HEK293 (cell line): ENCODE measurements at regions of chr14 and their contacts with region 1.

Region 1: GRCh38 chr14:76386915-76387782 is 11.2 kb downstream of the ESRRB start:
- H3K4me3 ChIP-seq: no peak overlapping the region
- H3K27ac ChIP-seq: no peak overlapping the region
- H3K4me1 ChIP-seq: no peaks in the 10 kb centered on the region
- CTCF ChIP-seq: peak; percentile 69

Region 2: GRCh38 chr14:76376878-76377734 is 10.0 kb before region 1 on chr14:
- CTCF ChIA-PET with region 1: interaction called, 15 read pairs
- POLR2A ChIA-PET with region 1: no interaction called
- H3K4me3 ChIP-seq: peak overlapping the region; percentile 46
- H3K27ac ChIP-seq: no peak overlapping the region
- H3K4me1 ChIP-seq: peaks cover 6% of the 10 kb centered on the region
- CTCF ChIP-seq: no peak

Region 3: GRCh38 chr14:76480421-76480820 is 93.3 kb after region 1 on chr14:
- CTCF ChIA-PET with region 1: no interaction called
- POLR2A ChIA-PET with region 1: no interaction called
- H3K4me3 ChIP-seq: no peak overlapping the region
- H3K27ac ChIP-seq: no peak overlapping the region
- H3K4me1 ChIP-seq: peaks cover 2% of the 10 kb centered on the region
- CTCF ChIP-seq: no peak

Region 4: GRCh38 chr14:76537906-76538647 is 150.9 kb after region 1 on chr14:
- CTCF ChIA-PET with region 1: no interaction called
- POLR2A ChIA-PET with region 1: no interaction called
- H3K4me3 ChIP-seq: no peak overlapping the region
- H3K27ac ChIP-seq: no peak overlapping the region
- H3K4me1 ChIP-seq: peaks cover 16% of the 10 kb centered on the region
- CTCF ChIP-seq: no peak

Region 5: GRCh38 chr14:76584271-76584702 is 197.1 kb after region 1 on chr14:
- CTCF ChIA-PET with region 1: no interaction called
- POLR2A ChIA-PET with region 1: no interaction called
- H3K4me3 ChIP-seq: no peak overlapping the region
- H3K27ac ChIP-seq: peak overlapping the region; percentile 37; the same call in 1 of the 2 replicates
- H3K4me1 ChIP-seq: peaks cover 11% of the 10 kb centered on the region; the same call in 1 of the 2 replicates
- CTCF ChIP-seq: no peak

Region 6: GRCh38 chr14:76654573-76655090 is 267.5 kb after region 1 on chr14:
- CTCF ChIA-PET with region 1: no interaction called
- POLR2A ChIA-PET with region 1: no interaction called
- H3K4me3 ChIP-seq: no peak overlapping the region
- H3K27ac ChIP-seq: no peak overlapping the region
- H3K4me1 ChIP-seq: no peaks in the 10 kb centered on the region
- CTCF ChIP-seq: no peak